GM10248 (cell line): ENCODE measurements at regions of chr11 and their contacts with region 1.

Region 1: DNA sequence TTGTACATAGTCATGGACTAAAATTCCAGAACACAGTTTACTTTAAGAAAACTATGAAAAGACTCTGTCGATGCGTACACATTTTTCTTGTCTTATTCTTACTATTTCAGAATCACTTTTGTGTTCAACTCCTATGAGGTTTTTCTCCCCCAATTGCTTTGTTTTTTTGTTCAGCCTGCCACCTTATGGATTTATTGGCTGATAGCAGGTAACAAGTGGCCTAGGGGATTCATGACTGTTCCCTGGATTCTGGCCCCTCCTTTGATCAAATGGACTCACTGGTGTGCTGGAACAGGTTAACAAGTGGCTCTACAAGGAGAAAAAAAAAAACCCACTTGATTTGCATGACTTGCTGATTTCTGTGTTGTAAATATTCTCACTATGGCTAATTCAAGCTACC is 10.6 kb downstream of the MMP20 start:
- DNase-seq: no peak
- CTCF ChIP-seq: peak; percentile 37

Region 2: GRCh38 chr11:102287964-102288724 is 326.3 kb before region 1 on chr11:
- CTCF ChIA-PET with region 1: interaction called, 159 read pairs
- POLR2A ChIA-PET with region 1: no interaction called
- DNase-seq: peak; percentile 80
- CTCF ChIP-seq: peak; percentile 70

Region 3: GRCh38 chr11:102390667-102391465 is 223.6 kb before region 1 on chr11:
- CTCF ChIA-PET with region 1: interaction called, 93 read pairs
- POLR2A ChIA-PET with region 1: interaction called, 3 read pairs
- DNase-seq: peak; percentile 63
- CTCF ChIP-seq: peak; percentile 92

Region 4: GRCh38 chr11:102476812-102477211 is 137.7 kb before region 1 on chr11:
- CTCF ChIA-PET with region 1: interaction called, 11 read pairs
- POLR2A ChIA-PET with region 1: no interaction called
- DNase-seq: no peak
- CTCF ChIP-seq: no peak

Region 5: GRCh38 chr11:102539567-102539966 is 74.9 kb before region 1 on chr11:
- CTCF ChIA-PET with region 1: interaction called, 53 read pairs
- POLR2A ChIA-PET with region 1: no interaction called
- DNase-seq: no peak
- CTCF ChIP-seq: no peak

Region 6: DNA sequence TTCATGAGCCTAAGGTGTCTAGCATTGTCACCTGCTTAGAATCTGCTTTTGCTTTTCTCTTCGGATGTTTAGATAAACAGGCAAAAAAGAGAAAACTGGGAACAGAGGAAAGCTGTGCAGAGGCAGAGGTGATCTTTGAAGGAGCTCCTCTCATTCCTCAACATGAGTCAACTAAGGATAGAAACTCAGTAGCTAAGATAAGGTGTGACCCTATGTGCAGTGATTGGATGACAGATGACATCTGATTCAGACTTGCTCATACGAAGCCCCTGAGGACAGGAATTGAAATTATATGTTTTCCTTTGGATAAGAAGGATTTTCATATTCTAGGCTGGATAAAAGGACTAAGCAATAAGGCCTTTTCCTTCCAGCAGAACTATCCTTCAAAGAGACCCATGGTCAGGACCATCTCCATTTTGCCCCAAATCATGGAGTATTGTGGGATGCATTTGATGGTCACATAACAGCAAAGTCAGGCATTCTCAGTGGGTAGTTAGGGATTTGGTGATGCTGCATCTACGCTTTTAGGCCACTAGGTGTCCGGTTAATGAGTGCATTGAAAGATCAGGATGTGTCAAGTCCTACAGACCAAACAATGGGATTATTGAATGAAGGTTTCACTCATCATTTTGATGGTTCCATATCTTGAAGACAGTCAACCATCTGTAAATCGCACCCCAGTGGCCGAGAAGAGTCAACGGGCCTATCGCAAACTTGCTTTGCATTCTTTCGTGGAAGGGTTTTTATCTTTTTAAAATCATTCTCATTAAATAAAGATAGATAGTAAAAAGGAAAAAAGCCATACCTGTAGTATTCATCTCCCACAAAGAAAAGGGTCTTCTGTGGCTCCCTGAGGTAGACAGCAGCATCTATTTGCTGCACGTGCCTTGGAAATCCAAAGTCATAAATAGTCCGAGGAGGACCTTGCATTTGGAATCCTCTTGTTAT is 21.6 kb before region 1 on chr11:
- CTCF ChIA-PET with region 1: interaction called, 23 read pairs
- POLR2A ChIA-PET with region 1: interaction called, 3 read pairs
- DNase-seq: no peak
- CTCF ChIP-seq: peak; percentile 13

Region 7: DNA sequence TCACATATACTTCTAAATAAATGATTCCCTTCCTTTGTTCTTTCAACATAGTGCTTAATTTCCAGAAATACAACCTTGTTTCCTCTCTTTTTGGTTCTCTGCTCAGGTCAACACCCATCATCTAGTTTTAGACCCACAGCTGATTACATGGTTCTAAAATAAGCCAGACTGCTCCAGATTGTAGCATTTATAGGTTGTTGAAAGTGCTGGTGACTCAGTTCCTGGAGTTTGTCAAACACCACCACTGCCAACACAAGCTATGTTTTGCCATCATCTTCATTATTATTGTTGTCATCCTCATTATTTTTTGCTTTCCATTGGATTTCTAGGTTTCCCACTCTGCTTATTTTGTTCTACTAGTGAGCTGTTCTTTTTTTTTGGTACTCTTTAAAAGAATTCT is 32.9 kb after region 1 on chr11:
- CTCF ChIA-PET with region 1: no interaction called
- POLR2A ChIA-PET with region 1: no interaction called
- DNase-seq: no peak
- CTCF ChIP-seq: no peak

Region 8: DNA sequence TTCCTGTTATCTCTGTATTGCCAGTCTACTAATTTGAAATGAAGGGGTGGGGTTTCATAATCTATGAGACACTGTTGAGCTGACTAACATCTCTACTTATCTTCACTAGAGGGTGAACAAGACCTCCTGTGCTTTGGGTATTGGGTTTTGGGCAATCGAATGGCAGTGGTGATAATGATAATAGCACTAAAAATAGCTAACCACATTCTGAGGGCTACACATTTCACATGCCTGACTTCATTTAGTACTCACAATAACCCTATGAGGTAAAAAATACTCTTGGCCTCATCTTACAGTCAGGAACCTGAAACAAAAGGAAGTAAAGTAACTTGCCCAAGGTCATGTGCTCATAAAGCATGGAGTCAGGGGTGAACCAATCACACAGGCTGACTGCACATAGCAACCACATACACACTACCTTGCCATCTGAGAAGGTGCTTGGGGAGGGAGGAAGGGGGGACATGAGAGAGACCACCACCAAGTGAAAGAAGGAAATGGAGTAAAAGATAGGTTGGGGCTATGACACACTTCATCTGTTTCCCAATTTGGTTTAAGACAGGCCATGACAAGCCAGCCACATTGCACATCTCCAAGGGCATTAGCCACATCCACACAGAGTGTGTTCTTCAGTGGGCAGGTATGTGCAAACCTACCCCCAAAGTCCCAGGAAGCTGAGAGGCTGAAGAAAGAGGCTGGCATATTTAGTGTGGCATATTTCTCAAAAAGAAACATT is 1034.4 kb after region 1 on chr11:
- CTCF ChIA-PET with region 1: no interaction called
- POLR2A ChIA-PET with region 1: no interaction called
- DNase-seq: no peak
- CTCF ChIP-seq: no peak